ENCODE measurements at regions of chr6 and their contacts with region 1.

Region 1: DNA sequence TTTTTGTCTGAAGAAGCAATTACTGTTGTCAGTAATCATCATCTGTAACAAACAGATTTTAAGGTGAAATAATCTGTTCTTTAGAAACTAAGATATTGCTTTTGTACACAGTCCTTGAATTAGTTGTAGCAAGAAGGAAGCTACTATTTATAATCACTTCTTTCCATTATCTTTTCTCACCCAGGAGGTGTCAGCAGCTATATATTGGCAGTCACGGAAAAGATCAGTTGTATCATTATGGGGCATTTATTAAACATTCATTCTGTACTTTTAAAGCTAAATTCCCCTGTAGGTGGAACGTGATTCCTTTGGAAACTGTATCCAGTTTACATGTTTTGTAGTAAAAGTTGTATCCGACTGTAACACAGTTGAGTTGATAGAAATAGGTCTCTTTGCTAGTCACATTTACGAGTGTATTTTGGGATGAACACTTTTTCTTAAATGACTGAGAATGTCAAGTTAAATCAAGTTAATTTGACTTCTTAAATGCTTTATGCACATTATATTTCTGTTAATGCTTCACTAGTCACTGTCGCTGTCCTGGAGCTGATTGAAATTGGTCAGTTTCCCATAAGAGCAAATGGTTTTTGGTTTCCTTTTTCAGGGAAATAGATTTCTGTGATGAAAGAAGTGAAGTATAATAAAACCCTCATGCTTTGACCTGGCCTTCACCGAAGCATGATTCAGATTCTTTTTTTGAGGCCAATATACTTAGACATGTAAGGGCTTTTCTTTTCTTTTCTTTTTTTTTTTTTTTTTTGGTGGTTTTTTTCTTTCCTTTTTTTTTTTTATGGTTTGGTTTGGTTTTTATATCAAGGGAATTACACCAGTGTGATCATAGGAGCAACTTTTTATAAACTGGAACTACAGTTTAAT is 5.1 kb downstream of the QKI start:
- DNase-seq: no peak
- ATAC-seq: peak; percentile 10 to 26
- H3K4me3 ChIP-seq: peak overlapping the region; percentile 71 to 96 (median 87)
- H3K27ac ChIP-seq: peak overlapping the region; percentile 98 to 99 (median 99)
- H3K4me1 ChIP-seq: peaks cover 52 to 58% of the 10 kb centered on the region in 2 donors
- H3K27me3 ChIP-seq: no peaks in the 10 kb centered on the region
- CTCF ChIP-seq: no peak
- POLR2A ChIP-seq: peak in 1 of 2 donors; percentile 16

Region 2: DNA sequence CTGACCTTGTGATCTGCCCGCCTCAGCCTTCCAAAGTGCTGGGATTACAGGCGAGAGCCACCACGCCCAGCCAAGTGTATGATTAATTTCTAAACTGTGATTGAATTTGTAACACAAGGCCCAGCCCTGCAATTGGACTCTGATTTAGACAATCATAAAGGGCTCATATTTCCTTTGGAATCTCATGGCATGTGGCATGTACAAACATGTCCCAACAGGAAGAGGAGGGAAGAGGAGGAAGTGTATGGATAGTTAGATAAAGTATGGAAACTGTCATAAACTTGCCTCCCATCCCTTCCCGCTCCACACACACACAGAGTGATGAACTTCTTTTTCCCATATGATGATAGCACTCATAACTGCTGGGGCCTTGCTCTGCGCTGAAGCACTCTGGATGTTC is 32.3 kb before region 1 on chr6:
- in situ Hi-C with region 1: no loop called
- intact Hi-C with region 1: no loop called
- DNase-seq: no peak
- ATAC-seq: no peak
- H3K4me3 ChIP-seq: no peak overlapping the region
- H3K27ac ChIP-seq: no peak overlapping the region
- H3K4me1 ChIP-seq: peaks cover 0 to 7% of the 10 kb centered on the region in 2 donors
- H3K27me3 ChIP-seq: no peaks in the 10 kb centered on the region
- CTCF ChIP-seq: no peak
- POLR2A ChIP-seq: no peak

Region 3: GRCh38 chr6:163579880-163580295 is 160.2 kb after region 1 on chr6:
- in situ Hi-C with region 1: loop called in 3 of 4 experiments (anchors 5 to 10 kb)
- intact Hi-C with region 1: loop called (anchors 2 kb)
- DNase-seq: peak; percentile 37 to 62
- ATAC-seq: peak; percentile 71 to 80
- H3K4me3 ChIP-seq: peak overlapping the region in 1 of 4 donors; percentile 19
- H3K27ac ChIP-seq: peak overlapping the region; percentile 81 to 88 (median 86)
- H3K4me1 ChIP-seq: peaks cover 43 to 56% of the 10 kb centered on the region in 2 donors
- H3K27me3 ChIP-seq: no peaks in the 10 kb centered on the region
- CTCF ChIP-seq: peak in 1 of 5 experiments; percentile 10
- POLR2A ChIP-seq: no peak

Region 4: DNA sequence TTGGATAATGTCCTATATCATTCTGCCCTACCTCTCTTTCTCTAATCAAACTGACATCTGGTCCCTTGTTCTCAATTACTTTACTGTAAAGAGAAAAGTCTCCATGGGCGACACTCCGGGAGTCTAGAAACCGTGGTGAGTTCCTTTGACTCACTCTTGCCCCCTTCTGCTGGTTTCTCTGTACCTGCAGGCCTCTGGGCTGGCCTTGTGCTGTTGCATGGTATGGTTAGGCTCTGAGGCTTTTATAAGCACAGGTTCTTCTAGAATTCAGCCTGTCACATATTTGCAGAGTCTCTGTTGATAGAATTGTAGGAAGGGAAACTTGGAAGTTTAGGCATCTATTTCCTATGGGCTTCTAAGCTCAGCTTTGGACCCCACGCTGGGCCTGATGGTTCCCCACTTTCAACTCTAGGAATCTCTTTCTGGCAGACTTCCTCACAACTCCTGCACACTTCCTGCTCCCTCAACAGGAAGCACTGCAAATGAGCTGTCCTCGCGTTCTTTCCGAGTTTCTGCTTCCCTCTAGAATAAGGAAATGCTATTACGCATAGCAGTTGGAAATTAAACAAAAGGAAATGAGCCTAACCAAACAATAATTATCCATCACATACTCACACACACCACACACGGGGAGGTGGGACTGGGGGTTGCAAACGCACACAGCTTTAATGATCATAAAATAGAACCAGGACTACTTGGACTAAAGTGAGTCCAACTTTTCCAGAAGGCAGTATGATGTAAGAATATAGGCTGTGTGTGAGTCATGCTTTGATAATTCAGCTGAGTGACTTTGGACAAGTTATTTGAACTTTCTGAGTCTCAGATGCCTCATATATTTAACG is 678.1 kb after region 1 on chr6:
- in situ Hi-C with region 1: loop called in 2 of 4 experiments (anchors 5 to 10 kb)
- intact Hi-C with region 1: loop called (anchors 2 kb)
- DNase-seq: peak in 1 of 2 donors; percentile 68
- ATAC-seq: peak; percentile 41 to 62
- H3K4me3 ChIP-seq: no peak overlapping the region
- H3K27ac ChIP-seq: peak overlapping the region; percentile 84 to 96 (median 89)
- H3K4me1 ChIP-seq: peaks cover 33 to 37% of the 10 kb centered on the region in 2 donors
- H3K27me3 ChIP-seq: no peaks in the 10 kb centered on the region
- CTCF ChIP-seq: peak in 3 of 5 experiments; percentile 32 to 47 (median 38)
- POLR2A ChIP-seq: no peak

Measured in gastrocnemius medialis (tissue), 4 donors.